ENCODE measurements at regions of chr18 and their contacts with region 1.

Region 1: GRCh38 chr18:46481048-46481846 is 175.8 kb downstream of the LOXHD1 start:
- DNase-seq: peak; percentile 52 to 74
- ATAC-seq: peak; percentile 50 to 80 (median 77)
- H3K4me3 ChIP-seq: no peak overlapping the region
- H3K4me3 Mint-ChIP-seq: no peak overlapping the region
- H3K27ac ChIP-seq: no peak overlapping the region
- H3K27ac Mint-ChIP-seq: no peak overlapping the region
- H3K4me1 ChIP-seq: no peaks in the 10 kb centered on the region
- H3K4me1 Mint-ChIP-seq: peaks cover 7 to 12% of the 10 kb centered on the region in 2 donors
- H3K27me3 ChIP-seq: peaks cover 3% of the 10 kb centered on the region
- H3K27me3 Mint-ChIP-seq: peaks cover 6 to 8% of the 10 kb centered on the region in 2 donors
- CTCF ChIP-seq: peak; percentile 82

Region 2: DNA sequence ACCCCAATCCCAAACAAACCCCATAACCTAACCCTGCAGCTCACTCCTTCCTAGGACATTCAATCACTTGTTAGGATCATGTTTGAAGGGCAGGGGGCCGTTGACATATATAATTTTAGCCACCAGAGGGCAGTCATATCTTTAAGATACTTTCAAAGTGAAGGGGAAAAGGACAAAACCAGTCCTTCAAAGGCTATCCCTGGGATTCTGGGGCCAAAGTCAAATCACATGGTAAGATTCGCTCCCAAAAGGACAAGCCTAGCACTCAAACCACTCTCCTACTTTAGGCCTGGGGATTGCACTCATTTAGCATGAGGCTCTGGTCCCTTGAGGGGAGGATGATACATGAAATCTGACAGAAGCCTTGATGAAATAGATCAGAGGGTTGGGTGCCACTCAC is 332.4 kb before region 1 on chr18:
- intact Hi-C with region 1: loop called (anchors 1 kb)
- DNase-seq: peak in 1 of 2 donors; percentile 73
- ATAC-seq: peak in 2 of 3 donors; percentile 58 to 66
- H3K4me3 ChIP-seq: no peak overlapping the region
- H3K4me3 Mint-ChIP-seq: no peak overlapping the region
- H3K27ac ChIP-seq: no peak overlapping the region
- H3K27ac Mint-ChIP-seq: peak overlapping the region in 1 of 2 donors; percentile 19
- H3K4me1 ChIP-seq: peaks cover 7% of the 10 kb centered on the region
- H3K4me1 Mint-ChIP-seq: peaks cover 4 to 22% of the 10 kb centered on the region in 2 donors
- H3K27me3 ChIP-seq: no peaks in the 10 kb centered on the region
- H3K27me3 Mint-ChIP-seq: no peaks in the 10 kb centered on the region
- CTCF ChIP-seq: peak; percentile 77

Region 3: GRCh38 chr18:46213295-46213694 is 268.0 kb before region 1 on chr18:
- intact Hi-C with region 1: no loop called
- DNase-seq: peak in 1 of 2 donors; percentile 61
- ATAC-seq: peak; percentile 65 to 73 (median 71)
- H3K4me3 ChIP-seq: no peak overlapping the region
- H3K4me3 Mint-ChIP-seq: peak overlapping the region; percentile 52
- H3K27ac ChIP-seq: no peak overlapping the region
- H3K27ac Mint-ChIP-seq: peak overlapping the region in 1 of 2 donors; percentile 63
- H3K4me1 ChIP-seq: peaks cover 12% of the 10 kb centered on the region
- H3K4me1 Mint-ChIP-seq: peaks cover 60 to 69% of the 10 kb centered on the region in 2 donors
- H3K27me3 ChIP-seq: no peaks in the 10 kb centered on the region
- H3K27me3 Mint-ChIP-seq: no peaks in the 10 kb centered on the region
- CTCF ChIP-seq: peak; percentile 71

Measured in natural killer cell (primary cell).